Naive thymus-derived CD4-positive, alpha-beta T cell (primary cell): ENCODE measurements at regions of chrX and their contacts with region 1.

Region 1: GRCh38 chrX:135384161-135384836 is 37.4 kb upstream of the SMIM10L2A start:
- DNase-seq: peak in 8 of 9 donors; percentile 35 to 70 (median 56)
- ATAC-seq: peak; percentile 97
- H3K4me3 ChIP-seq: peak overlapping the region; percentile 35
- H3K4me3 Mint-ChIP-seq: peak overlapping the region; percentile 46 to 78 (median 64)
- H3K27ac ChIP-seq: no peak overlapping the region
- H3K27ac Mint-ChIP-seq: peak overlapping the region; percentile 17 to 92 (median 72)
- H3K4me1 ChIP-seq: peaks cover 30 to 40% of the 10 kb centered on the region in 2 donors
- H3K4me1 Mint-ChIP-seq: peaks cover 17 to 50% (median 44%) of the 10 kb centered on the region in 7 donors
- H3K27me3 ChIP-seq: no peaks in the 10 kb centered on the region
- H3K27me3 Mint-ChIP-seq: no peaks in the 10 kb centered on the region

Region 2: GRCh38 chrX:135373357-135373756 is 10.9 kb before region 1 on chrX:
- CTCF ChIA-PET with region 1: no interaction called
- POLR2A ChIA-PET with region 1: no interaction called
- intact Hi-C with region 1: no loop called
- DNase-seq: no peak
- ATAC-seq: no peak
- H3K4me3 ChIP-seq: no peak overlapping the region
- H3K4me3 Mint-ChIP-seq: no peak overlapping the region
- H3K27ac ChIP-seq: no peak overlapping the region
- H3K27ac Mint-ChIP-seq: no peak overlapping the region
- H3K4me1 ChIP-seq: no peaks in the 10 kb centered on the region
- H3K4me1 Mint-ChIP-seq: peaks cover 0 to 11% (median 4%) of the 10 kb centered on the region in 7 donors
- H3K27me3 ChIP-seq: no peaks in the 10 kb centered on the region
- H3K27me3 Mint-ChIP-seq: no peaks in the 10 kb centered on the region

Region 3: DNA sequence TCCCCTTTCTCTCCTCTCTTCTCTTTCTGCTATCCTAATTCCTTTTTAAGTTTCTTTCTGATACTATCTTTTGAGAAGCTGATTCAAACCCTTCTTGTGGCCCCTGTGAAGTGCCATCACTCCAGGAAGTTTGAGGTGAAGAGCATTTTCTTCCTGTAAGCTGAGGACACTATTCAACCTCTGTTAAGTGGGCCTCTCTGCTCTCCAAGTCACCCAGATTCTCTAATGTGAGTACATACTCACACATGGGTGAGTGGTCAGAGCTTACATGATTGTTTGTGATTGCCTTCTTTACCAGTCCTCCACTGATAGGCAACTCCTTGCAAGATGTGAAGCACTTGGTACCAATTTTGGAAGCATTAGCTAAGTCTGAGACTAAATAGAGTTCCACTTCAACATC is 19.1 kb after region 1 on chrX:
- CTCF ChIA-PET with region 1: no interaction called
- POLR2A ChIA-PET with region 1: interaction called, 3 read pairs
- intact Hi-C with region 1: loop called in 1 of 2 experiments (anchors 1 kb)
- DNase-seq: peak in 2 of 9 donors; percentile 12 to 13
- ATAC-seq: no peak
- H3K4me3 ChIP-seq: no peak overlapping the region
- H3K4me3 Mint-ChIP-seq: peak overlapping the region in 9 of 10 donors; percentile 14 to 68 (median 48)
- H3K27ac ChIP-seq: no peak overlapping the region
- H3K27ac Mint-ChIP-seq: peak overlapping the region in 7 of 9 donors; percentile 14 to 90 (median 53)
- H3K4me1 ChIP-seq: peaks cover 3 to 29% of the 10 kb centered on the region in 2 donors
- H3K4me1 Mint-ChIP-seq: peaks cover 8 to 39% (median 29%) of the 10 kb centered on the region in 7 donors
- H3K27me3 ChIP-seq: no peaks in the 10 kb centered on the region
- H3K27me3 Mint-ChIP-seq: peaks cover 0 to 5% (median 0%) of the 10 kb centered on the region in 5 donors